ENCODE measurements at regions of chr17 and their contacts with region 1.

Region 1: GRCh38 chr17:76278952-76279741 is 14.0 kb downstream of the UBALD2 start:
- DNase-seq: peak; percentile 86 to 94 (median 91)
- H3K4me3 ChIP-seq: peak overlapping the region in 1 of 3 donors; percentile 29
- H3K27ac ChIP-seq: no peak overlapping the region
- H3K4me1 ChIP-seq: peaks cover 0 to 6% (median 0%) of the 10 kb centered on the region in 3 donors
- H3K27me3 ChIP-seq: no peaks in the 10 kb centered on the region
- CTCF ChIP-seq: peak; percentile 94

Region 2: GRCh38 chr17:76014184-76014924 is 264.8 kb before region 1 on chr17:
- intact Hi-C with region 1: loop called (anchors 10 kb)
- DNase-seq: peak; percentile 86 to 90 (median 88)
- H3K4me3 ChIP-seq: no peak overlapping the region
- H3K27ac ChIP-seq: no peak overlapping the region
- H3K4me1 ChIP-seq: no peaks in the 10 kb centered on the region
- H3K27me3 ChIP-seq: no peaks in the 10 kb centered on the region
- CTCF ChIP-seq: peak; percentile 95

Region 3: GRCh38 chr17:76121932-76122430 is 157.2 kb before region 1 on chr17:
- intact Hi-C with region 1: loop called (anchors 5 kb)
- DNase-seq: peak in 3 of 5 donors; percentile 36 to 65 (median 59)
- H3K4me3 ChIP-seq: peak overlapping the region in 1 of 3 donors; percentile 48
- H3K27ac ChIP-seq: no peak overlapping the region
- H3K4me1 ChIP-seq: peaks cover 0 to 6% (median 0%) of the 10 kb centered on the region in 3 donors
- H3K27me3 ChIP-seq: no peaks in the 10 kb centered on the region
- CTCF ChIP-seq: no peak